ENCODE measurements at regions of chrX and their contacts with region 1.

Region 1: GRCh38 chrX:47658684-47659515 is at the start of gene UXT:
- DNase-seq: peak; percentile 91
- H3K4me3 ChIP-seq: peak within 1 kb of the TSS; percentile 17 to 80 (median 77)
- H3K27ac ChIP-seq: peak within 1 kb of the TSS; percentile 79
- H3K4me1 ChIP-seq: peaks cover 5% of the 10 kb centered on the region
- H3K27me3 ChIP-seq: no peaks in the 10 kb centered on the region
- CTCF ChIP-seq: no peak
- POLR2A ChIP-seq: peak; percentile 54
- total RNA-seq, gene UXT: 91.2 and 95.7 TPM in 2 replicates

Region 2: GRCh38 chrX:47836164-47837072 is 177.5 kb after region 1 on chrX and contains the start of gene ZNF81:
- CTCF ChIA-PET with region 1: no interaction called
- POLR2A ChIA-PET with region 1: no interaction called
- dilution Hi-C with region 1: no loop called
- intact Hi-C with region 1: loop called (anchors 5 kb)
- DNase-seq: peak; percentile 95
- H3K4me3 ChIP-seq: peak within 1 kb of the TSS; percentile 62 to 91 (median 67)
- H3K27ac ChIP-seq: peak within 1 kb of the TSS; percentile 55
- H3K4me1 ChIP-seq: peaks cover 4% of the 10 kb centered on the region
- H3K27me3 ChIP-seq: no peaks in the 10 kb centered on the region
- CTCF ChIP-seq: no peak
- POLR2A ChIP-seq: peak; percentile 54
- total RNA-seq, gene ZNF81: 6.4 and 9.6 TPM in 2 replicates

Region 3: GRCh38 chrX:49269010-49269767 is 1610.3 kb after region 1 on chrX:
- CTCF ChIA-PET with region 1: no interaction called
- POLR2A ChIA-PET with region 1: no interaction called
- dilution Hi-C with region 1: no loop called
- intact Hi-C with region 1: loop called (anchors 5 kb)
- DNase-seq: peak; percentile 97
- H3K4me3 ChIP-seq: peak overlapping the region; percentile 23 to 78 (median 59)
- H3K27ac ChIP-seq: peak overlapping the region; percentile 80
- H3K4me1 ChIP-seq: no peaks in the 10 kb centered on the region
- H3K27me3 ChIP-seq: no peaks in the 10 kb centered on the region
- CTCF ChIP-seq: no peak
- POLR2A ChIP-seq: peak; percentile 67

Measured in endothelial cell of umbilical vein (primary cell).